CD4-positive, alpha-beta T cell (primary cell): ENCODE measurements at regions of chr4 and their contacts with region 1.

Region 1: GRCh38 chr4:77044461-77045150 is 31.2 kb downstream of the CCNI start:
- DNase-seq: peak in 3 of 14 experiments; percentile 48 to 64 (median 62)
- ATAC-seq: peak; percentile 57
- H3K4me3 ChIP-seq: no peak overlapping the region
- H3K4me3 Mint-ChIP-seq: no peak overlapping the region
- H3K27ac ChIP-seq: no peak overlapping the region
- H3K27ac Mint-ChIP-seq: peak overlapping the region; percentile 1
- H3K4me1 ChIP-seq: no peaks in the 10 kb centered on the region
- H3K4me1 Mint-ChIP-seq: peaks cover 29% of the 10 kb centered on the region
- H3K27me3 ChIP-seq: no peaks in the 10 kb centered on the region
- H3K27me3 Mint-ChIP-seq: no peaks in the 10 kb centered on the region
- CTCF ChIP-seq: peak; percentile 78

Region 2: DNA sequence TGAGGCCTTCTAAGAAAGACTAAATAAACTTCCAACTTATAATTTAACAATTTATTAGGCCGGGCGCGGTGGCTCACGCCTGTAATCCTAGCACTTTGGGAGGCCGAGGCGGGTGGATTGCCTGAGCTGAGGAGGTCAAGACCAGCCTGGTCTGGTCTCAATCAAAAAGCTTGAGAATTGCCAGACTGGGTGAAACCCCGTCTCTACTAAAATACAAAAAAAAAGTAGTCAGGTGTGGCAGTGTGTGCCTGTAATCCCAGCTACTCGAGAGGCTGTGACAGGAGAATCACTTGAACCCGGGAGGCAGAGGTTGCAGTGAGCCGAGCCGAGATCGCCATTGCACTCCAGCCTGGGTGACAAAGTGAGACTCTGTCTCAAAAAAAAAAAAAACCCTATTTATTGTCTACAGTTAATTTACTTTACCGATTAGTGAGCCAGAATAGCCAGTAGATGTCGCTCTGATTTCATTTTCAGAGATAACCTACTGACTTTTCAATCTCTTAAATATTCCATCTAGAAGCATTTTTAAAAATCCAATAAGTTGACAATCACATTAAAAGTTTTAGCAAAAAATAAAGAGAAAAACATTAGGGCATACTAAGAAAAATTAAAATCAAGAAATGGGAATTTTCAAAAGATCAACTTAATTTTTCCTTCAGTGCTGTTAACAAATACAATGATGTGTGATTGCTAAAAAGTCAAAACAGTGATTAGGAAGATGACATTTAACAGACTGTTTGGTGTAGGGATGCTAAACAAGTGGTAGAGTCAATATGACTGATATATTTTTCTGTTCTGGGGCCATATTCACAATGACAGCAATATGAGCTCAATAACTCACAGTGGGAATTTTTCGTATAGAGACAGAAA is 613.9 kb before region 1 on chr4:
- CTCF ChIA-PET with region 1: no interaction called
- POLR2A ChIA-PET with region 1: no interaction called
- intact Hi-C with region 1: loop called (anchors 5 to 10 kb)
- DNase-seq: peak in 4 of 14 experiments; percentile 3 to 57 (median 40)
- ATAC-seq: no peak
- H3K4me3 ChIP-seq: no peak overlapping the region
- H3K4me3 Mint-ChIP-seq: no peak overlapping the region
- H3K27ac ChIP-seq: no peak overlapping the region
- H3K27ac Mint-ChIP-seq: no peak overlapping the region
- H3K4me1 ChIP-seq: peaks cover 3% of the 10 kb centered on the region
- H3K4me1 Mint-ChIP-seq: no peaks in the 10 kb centered on the region
- H3K27me3 ChIP-seq: peaks cover 2 to 8% of the 10 kb centered on the region in 2 experiments
- H3K27me3 Mint-ChIP-seq: peaks cover 16% of the 10 kb centered on the region
- CTCF ChIP-seq: peak; percentile 79

Region 3: GRCh38 chr4:76772498-76773106 is 272.0 kb before region 1 on chr4:
- CTCF ChIA-PET with region 1: no interaction called
- POLR2A ChIA-PET with region 1: no interaction called
- intact Hi-C with region 1: loop called in 1 of 2 experiments (anchors 10 kb)
- DNase-seq: no peak
- ATAC-seq: no peak
- H3K4me3 ChIP-seq: no peak overlapping the region
- H3K4me3 Mint-ChIP-seq: no peak overlapping the region
- H3K27ac ChIP-seq: no peak overlapping the region
- H3K27ac Mint-ChIP-seq: no peak overlapping the region
- H3K4me1 ChIP-seq: no peaks in the 10 kb centered on the region
- H3K4me1 Mint-ChIP-seq: no peaks in the 10 kb centered on the region
- H3K27me3 ChIP-seq: no peaks in the 10 kb centered on the region
- H3K27me3 Mint-ChIP-seq: peaks cover 4% of the 10 kb centered on the region
- CTCF ChIP-seq: no peak

Region 4: DNA sequence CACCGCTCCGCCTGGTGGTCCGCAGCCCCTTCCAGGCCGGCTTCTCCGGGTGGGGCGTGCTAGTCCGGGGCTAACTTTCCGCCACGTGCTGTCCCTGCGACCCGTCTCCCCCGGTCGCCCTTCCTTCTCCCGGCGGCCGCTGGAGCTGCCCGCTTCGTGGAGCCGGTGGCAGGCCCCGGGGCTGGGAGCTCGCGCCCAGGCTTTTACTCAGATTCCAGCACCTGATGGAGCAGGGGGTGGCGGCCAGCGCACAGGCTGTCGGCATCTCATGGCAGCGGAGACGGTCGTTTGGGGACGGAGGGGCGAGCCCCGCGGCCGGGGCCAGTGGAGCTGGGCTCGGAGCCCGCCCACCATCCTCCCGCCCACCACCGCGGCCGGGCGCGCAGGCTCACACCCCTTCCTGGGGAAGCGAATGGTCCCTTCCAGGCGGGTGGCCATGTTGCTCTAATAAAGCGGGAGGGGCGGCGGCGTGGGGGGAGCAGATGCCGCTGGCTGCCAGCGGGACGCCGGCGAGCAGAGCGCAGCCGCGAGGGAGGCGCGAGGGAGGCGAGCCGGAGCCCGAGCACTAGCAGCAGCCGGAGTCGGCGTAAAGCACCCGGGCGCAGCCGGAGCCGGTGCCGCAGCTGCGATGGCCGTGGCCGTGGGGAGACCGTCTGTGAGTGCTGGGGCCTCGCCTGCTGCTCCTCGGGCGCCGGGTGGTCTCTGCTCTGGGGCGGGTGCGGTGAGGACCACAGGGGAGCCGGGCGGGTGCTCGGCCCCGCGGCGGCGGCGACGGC is 95.1 kb before region 1 on chr4 and contains the start of gene SEPTIN11:
- CTCF ChIA-PET with region 1: no interaction called
- POLR2A ChIA-PET with region 1: interaction called, 5 read pairs
- intact Hi-C with region 1: loop called (anchors 1 to 2 kb)
- DNase-seq: peak; percentile 65 to 93 (median 78)
- ATAC-seq: peak; percentile 79
- H3K4me3 ChIP-seq: peak within 1 kb of the TSS; percentile 75
- H3K4me3 Mint-ChIP-seq: peak within 1 kb of the TSS; percentile 89
- H3K27ac ChIP-seq: no peak within 1 kb of the TSS
- H3K27ac Mint-ChIP-seq: peak within 1 kb of the TSS; percentile 76
- H3K4me1 ChIP-seq: peaks cover 27% of the 10 kb centered on the region
- H3K4me1 Mint-ChIP-seq: peaks cover 21% of the 10 kb centered on the region
- H3K27me3 ChIP-seq: no peaks in the 10 kb centered on the region
- H3K27me3 Mint-ChIP-seq: no peaks in the 10 kb centered on the region
- CTCF ChIP-seq: no peak
- total RNA-seq, gene SEPTIN11: 8.1 to 9.4 TPM

Region 5: DNA sequence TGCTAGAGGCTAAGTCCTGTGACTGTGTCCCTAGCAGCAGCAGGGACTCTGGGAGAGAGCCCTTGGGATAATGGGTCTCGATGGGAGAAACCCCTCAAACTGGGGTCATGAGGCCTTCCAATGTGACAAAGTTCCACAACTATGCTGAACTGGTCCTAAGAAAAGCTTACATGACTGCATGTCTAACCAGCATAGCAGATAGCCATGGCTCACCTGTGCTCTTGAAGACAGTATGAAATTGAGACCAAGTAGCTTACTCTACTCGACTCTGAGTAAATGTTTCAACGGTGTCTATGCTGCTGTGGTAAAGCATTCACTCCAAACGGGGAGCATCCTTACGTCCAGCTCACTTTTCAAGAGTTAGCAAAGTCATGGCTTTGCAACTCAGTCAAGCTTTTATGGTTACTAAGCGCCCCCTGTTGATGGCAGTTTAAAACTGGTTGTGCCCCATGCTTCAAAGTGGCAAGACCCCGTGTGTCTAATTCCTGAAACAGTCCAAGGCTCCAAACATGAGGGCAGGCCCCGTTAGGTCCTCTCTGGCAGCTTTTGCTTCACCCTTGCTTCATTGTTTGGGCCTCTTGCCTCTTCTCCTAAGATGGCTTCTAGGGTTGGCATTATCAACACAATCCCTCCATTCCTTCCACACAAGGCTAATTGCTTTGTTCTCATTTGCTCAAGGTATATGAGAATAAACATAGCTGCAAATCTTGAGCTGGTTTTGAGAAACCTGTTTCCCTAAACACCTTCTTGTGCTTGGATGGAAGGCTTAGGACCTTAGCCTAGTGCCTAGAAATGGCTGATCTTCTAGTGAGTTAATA is 159.0 kb after region 1 on chr4:
- CTCF ChIA-PET with region 1: interaction called, 11 read pairs
- POLR2A ChIA-PET with region 1: interaction called, 5 read pairs
- intact Hi-C with region 1: loop called (anchors 1 to 2 kb)
- DNase-seq: peak; percentile 36 to 85 (median 56)
- ATAC-seq: peak; percentile 74
- H3K4me3 ChIP-seq: no peak overlapping the region
- H3K4me3 Mint-ChIP-seq: no peak overlapping the region
- H3K27ac ChIP-seq: no peak overlapping the region
- H3K27ac Mint-ChIP-seq: no peak overlapping the region
- H3K4me1 ChIP-seq: peaks cover 4% of the 10 kb centered on the region
- H3K4me1 Mint-ChIP-seq: no peaks in the 10 kb centered on the region
- H3K27me3 ChIP-seq: no peaks in the 10 kb centered on the region
- H3K27me3 Mint-ChIP-seq: no peaks in the 10 kb centered on the region
- CTCF ChIP-seq: peak; percentile 89